Heart right ventricle (tissue), 16 donors: ENCODE measurements at regions of chr1 and their contacts with region 1.

Region 1: GRCh38 chr1:93317207-93317606 is 28.5 kb upstream of the DR1 start:
- DNase-seq: peak in 1 of 2 donors; percentile 22
- ATAC-seq: peak in 6 of 8 donors; percentile 23 to 79 (median 62)
- H3K4me3 ChIP-seq: no peak overlapping the region
- H3K27ac ChIP-seq: no peak overlapping the region
- H3K4me1 ChIP-seq: peaks cover 0 to 11% (median 0%) of the 10 kb centered on the region in 9 donors
- H3K27me3 ChIP-seq: no peaks in the 10 kb centered on the region
- CTCF ChIP-seq: no peak

Region 2: DNA sequence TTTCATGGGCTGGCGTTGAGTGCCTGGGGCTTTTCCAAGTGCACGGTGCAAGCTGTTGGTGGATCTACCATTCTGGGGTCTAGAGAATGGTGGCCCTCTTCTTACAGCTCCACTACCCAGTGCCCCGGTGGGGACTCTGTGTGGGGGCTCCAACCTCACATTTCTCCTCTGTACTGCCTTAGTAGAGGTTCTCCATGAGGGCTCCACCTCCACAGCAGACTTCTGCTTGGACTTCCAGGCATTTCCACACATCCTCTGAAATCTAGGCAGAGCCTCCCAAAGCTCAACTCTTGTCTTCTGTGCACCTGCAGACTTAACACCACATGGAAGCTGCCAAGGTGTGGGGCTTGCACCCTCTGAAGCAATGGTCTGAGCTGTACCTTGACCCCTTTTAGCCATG is 54.6 kb before region 1 on chr1:
- intact Hi-C with region 1: no loop called
- DNase-seq: no peak
- ATAC-seq: no peak
- H3K4me3 ChIP-seq: no peak overlapping the region
- H3K27ac ChIP-seq: no peak overlapping the region
- H3K4me1 ChIP-seq: no peaks in the 10 kb centered on the region
- H3K27me3 ChIP-seq: no peaks in the 10 kb centered on the region
- CTCF ChIP-seq: no peak

Region 3: GRCh38 chr1:93414749-93415148 is 97.5 kb after region 1 on chr1:
- intact Hi-C with region 1: loop called in 1 of 10 experiments (anchors 10 kb)
- DNase-seq: no peak
- ATAC-seq: peak in 4 of 8 donors; percentile 14 to 65 (median 38)
- H3K4me3 ChIP-seq: peak overlapping the region in 5 of 10 donors; percentile 18 to 39 (median 31)
- H3K27ac ChIP-seq: peak overlapping the region in 8 of 10 donors; percentile 7 to 75 (median 54)
- H3K4me1 ChIP-seq: peaks cover 0 to 26% (median 12%) of the 10 kb centered on the region in 9 donors
- H3K27me3 ChIP-seq: no peaks in the 10 kb centered on the region
- CTCF ChIP-seq: no peak